ENCODE measurements at regions of chr3 and their contacts with region 1.

Region 1: GRCh38 chr3:170848292-170848917 is 21.6 kb downstream of the RPL22L1 start:
- DNase-seq: peak; percentile 75
- ATAC-seq: peak; percentile 63
- H3K4me3 ChIP-seq: no peak overlapping the region
- H3K27ac ChIP-seq: no peak overlapping the region
- H3K4me1 ChIP-seq: no peaks in the 10 kb centered on the region
- H3K27me3 ChIP-seq: no peaks in the 10 kb centered on the region
- CTCF ChIP-seq: peak; percentile 83

Region 2: GRCh38 chr3:170189398-170190256 is 658.8 kb before region 1 on chr3:
- CTCF ChIA-PET with region 1: no interaction called
- POLR2A ChIA-PET with region 1: no interaction called
- intact Hi-C with region 1: loop called (anchors 5 kb)
- DNase-seq: no peak
- ATAC-seq: peak; percentile 29
- H3K4me3 ChIP-seq: no peak overlapping the region; the same call in 1 of the 2 replicates
- H3K27ac ChIP-seq: no peak overlapping the region
- H3K4me1 ChIP-seq: no peaks in the 10 kb centered on the region
- H3K27me3 ChIP-seq: no peaks in the 10 kb centered on the region
- CTCF ChIP-seq: no peak; the same call in 1 of the 2 replicates

Region 3: DNA sequence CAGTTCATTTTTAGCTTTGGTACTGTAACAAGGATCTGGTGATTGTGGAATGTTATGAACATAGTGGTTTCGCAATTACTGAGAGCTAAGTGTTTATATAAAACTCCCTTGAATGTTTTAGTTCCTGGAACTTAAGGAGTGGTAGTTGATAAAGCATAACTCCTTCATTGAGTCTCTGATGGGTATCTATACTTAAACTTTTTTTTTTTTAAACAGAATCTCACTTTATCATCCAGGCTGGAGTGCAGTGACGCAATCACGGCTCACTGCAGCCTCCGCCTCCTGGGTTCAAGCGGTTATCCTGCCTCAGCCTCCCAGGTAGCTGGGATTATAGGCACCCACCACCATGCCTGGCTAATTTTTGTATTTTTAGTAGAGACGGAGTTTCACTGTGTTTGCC is 614.9 kb before region 1 on chr3:
- CTCF ChIA-PET with region 1: no interaction called
- POLR2A ChIA-PET with region 1: interaction called, 18 read pairs
- intact Hi-C with region 1: no loop called
- DNase-seq: peak; percentile 27
- ATAC-seq: no peak
- H3K4me3 ChIP-seq: no peak overlapping the region
- H3K27ac ChIP-seq: no peak overlapping the region
- H3K4me1 ChIP-seq: 0 out of 2 replicates have a peak, but pooled peaks cover 4% of the 10 kb centered on the region
- H3K27me3 ChIP-seq: no peaks in the 10 kb centered on the region
- CTCF ChIP-seq: no peak

Region 4: GRCh38 chr3:170307671-170308403 is 540.6 kb before region 1 on chr3:
- CTCF ChIA-PET with region 1: no interaction called
- POLR2A ChIA-PET with region 1: no interaction called
- intact Hi-C with region 1: loop called (anchors 5 kb)
- DNase-seq: peak; percentile 92
- ATAC-seq: peak; percentile 80
- H3K4me3 ChIP-seq: no peak overlapping the region
- H3K27ac ChIP-seq: peak overlapping the region; percentile 10; the same call in 1 of the 2 replicates
- H3K4me1 ChIP-seq: peaks cover 12% of the 10 kb centered on the region
- H3K27me3 ChIP-seq: no peaks in the 10 kb centered on the region
- CTCF ChIP-seq: no peak

Region 5: GRCh38 chr3:170499565-170500156 is 348.7 kb before region 1 on chr3:
- CTCF ChIA-PET with region 1: no interaction called
- POLR2A ChIA-PET with region 1: no interaction called
- intact Hi-C with region 1: loop called (anchors 1 kb)
- DNase-seq: peak; percentile 60
- ATAC-seq: peak; percentile 89
- H3K4me3 ChIP-seq: no peak overlapping the region
- H3K27ac ChIP-seq: no peak overlapping the region
- H3K4me1 ChIP-seq: no peaks in the 10 kb centered on the region
- H3K27me3 ChIP-seq: no peaks in the 10 kb centered on the region
- CTCF ChIP-seq: peak; percentile 76